A673 (cell line): ENCODE measurements at regions of chr1 and their contacts with region 1.

Region 1: DNA sequence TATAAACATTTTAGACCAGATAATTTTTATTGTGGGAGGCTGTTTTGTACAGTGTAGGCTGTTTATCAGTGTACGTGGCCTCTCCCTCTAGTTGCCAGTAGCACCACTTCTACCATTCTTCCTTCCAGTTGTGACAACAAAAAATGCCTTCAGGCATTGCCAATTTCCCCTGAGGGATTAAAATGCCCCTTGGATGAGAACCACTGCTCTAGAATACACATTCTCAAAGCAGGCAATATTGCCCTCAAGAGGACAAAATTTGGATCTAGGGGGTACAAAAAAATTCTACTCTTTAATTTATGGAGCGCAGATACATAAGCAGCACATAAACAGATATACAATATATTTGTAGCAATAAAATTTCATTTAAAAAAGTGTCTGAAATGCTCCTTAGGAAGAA is 674.6 kb downstream of the PTPRC start:
- DNase-seq: peak; percentile 95
- H3K4me3 ChIP-seq: no peak overlapping the region
- H3K27ac ChIP-seq: peak overlapping the region; percentile 95
- H3K4me1 ChIP-seq: peaks cover 47% of the 10 kb centered on the region
- H3K27me3 ChIP-seq: no peaks in the 10 kb centered on the region
- CTCF ChIP-seq: peak; percentile 62

Region 2: GRCh38 chr1:198892065-198892464 is 421.4 kb before region 1 on chr1:
- CTCF ChIA-PET with region 1: no interaction called
- POLR2A ChIA-PET with region 1: no interaction called
- intact Hi-C with region 1: loop called (anchors 5 kb)
- DNase-seq: peak; percentile 97
- H3K4me3 ChIP-seq: peak overlapping the region; percentile 4
- H3K27ac ChIP-seq: peak overlapping the region; percentile 94
- H3K4me1 ChIP-seq: peaks cover 97% of the 10 kb centered on the region
- H3K27me3 ChIP-seq: no peaks in the 10 kb centered on the region
- CTCF ChIP-seq: no peak

Region 3: GRCh38 chr1:199226163-199226562 is 87.3 kb before region 1 on chr1:
- CTCF ChIA-PET with region 1: no interaction called
- POLR2A ChIA-PET with region 1: no interaction called
- intact Hi-C with region 1: loop called (anchors 2 kb)
- DNase-seq: peak; percentile 88
- H3K4me3 ChIP-seq: no peak overlapping the region
- H3K27ac ChIP-seq: peak overlapping the region; percentile 90
- H3K4me1 ChIP-seq: peaks cover 28% of the 10 kb centered on the region
- H3K27me3 ChIP-seq: no peaks in the 10 kb centered on the region
- CTCF ChIP-seq: no peak

Region 4: GRCh38 chr1:199377211-199377610 is 63.8 kb after region 1 on chr1:
- CTCF ChIA-PET with region 1: no interaction called
- POLR2A ChIA-PET with region 1: no interaction called
- intact Hi-C with region 1: no loop called
- DNase-seq: no peak
- H3K4me3 ChIP-seq: no peak overlapping the region
- H3K27ac ChIP-seq: no peak overlapping the region
- H3K4me1 ChIP-seq: no peaks in the 10 kb centered on the region
- H3K27me3 ChIP-seq: no peaks in the 10 kb centered on the region
- CTCF ChIP-seq: no peak

Region 5: GRCh38 chr1:199422198-199422597 is 108.8 kb after region 1 on chr1:
- CTCF ChIA-PET with region 1: no interaction called
- POLR2A ChIA-PET with region 1: no interaction called
- intact Hi-C with region 1: loop called (anchors 2 kb)
- DNase-seq: peak; percentile 76
- H3K4me3 ChIP-seq: no peak overlapping the region
- H3K27ac ChIP-seq: peak overlapping the region; percentile 34
- H3K4me1 ChIP-seq: peaks cover 3% of the 10 kb centered on the region
- H3K27me3 ChIP-seq: no peaks in the 10 kb centered on the region
- CTCF ChIP-seq: peak; percentile 70

Region 6: DNA sequence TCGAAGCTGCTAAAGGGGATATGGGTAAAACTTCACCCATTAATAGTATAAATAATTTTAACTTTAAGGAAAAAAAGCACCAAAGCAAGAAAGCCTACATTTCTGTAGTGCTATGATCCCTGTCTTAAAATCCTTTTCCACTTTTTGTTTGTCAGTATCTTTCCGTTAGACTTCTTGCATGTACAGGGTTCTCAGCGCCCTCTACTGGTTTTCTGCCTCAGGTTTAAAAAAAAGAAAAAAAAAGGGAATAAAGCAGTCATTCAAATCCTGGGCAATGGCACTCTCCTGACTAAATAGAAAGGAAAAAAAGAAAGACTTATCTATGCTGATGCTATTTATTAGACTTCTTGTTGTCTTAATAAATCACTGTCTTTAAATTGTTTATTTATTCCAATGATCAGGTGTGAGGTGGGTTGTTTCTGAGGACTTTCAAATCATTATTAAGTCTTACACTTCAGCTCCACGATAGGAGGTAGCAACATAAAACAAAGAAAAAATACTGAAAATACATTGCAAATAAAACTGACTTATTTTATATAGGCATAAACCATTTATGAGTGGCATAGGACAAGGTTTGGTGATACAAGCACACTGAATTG is 238.6 kb after region 1 on chr1:
- CTCF ChIA-PET with region 1: no interaction called
- POLR2A ChIA-PET with region 1: no interaction called
- intact Hi-C with region 1: loop called (anchors 1 kb)
- DNase-seq: peak; percentile 90
- H3K4me3 ChIP-seq: no peak overlapping the region
- H3K27ac ChIP-seq: peak overlapping the region; percentile 81
- H3K4me1 ChIP-seq: peaks cover 33% of the 10 kb centered on the region
- H3K27me3 ChIP-seq: no peaks in the 10 kb centered on the region
- CTCF ChIP-seq: peak; percentile 92